Astrocyte of the cerebellum (primary cell): ENCODE measurements at regions of chr22 and their contacts with region 1.

Region 1: GRCh38 chr22:25488244-25489020 is 76.0 kb upstream of the GRK3 start:
- DNase-seq: peak; percentile 75
- H3K4me3 ChIP-seq: no peak overlapping the region
- CTCF ChIP-seq: no peak

Region 2: GRCh38 chr22:25680956-25681355 is 192.5 kb after region 1 on chr22:
- in situ Hi-C with region 1: loop called (anchors 25 kb)
- DNase-seq: no peak
- H3K4me3 ChIP-seq: no peak overlapping the region
- CTCF ChIP-seq: no peak